ENCODE measurements at regions of chr11 and their contacts with region 1.

Region 1: GRCh38 chr11:119474682-119475596 is 52.0 kb upstream of the THY1 start:
- DNase-seq: peak; percentile 92
- H3K4me3 ChIP-seq: no peak overlapping the region
- H3K27ac ChIP-seq: peak overlapping the region; percentile 55 to 71 (median 64)
- H3K4me1 ChIP-seq: peaks cover 0 to 32% (median 23%) of the 10 kb centered on the region in 4 donors
- H3K27me3 ChIP-seq: no peaks in the 10 kb centered on the region
- CTCF ChIP-seq: peak; percentile 89 to 92 (median 90)
- EP300 ChIP-seq: no peak
- POLR2A ChIP-seq: no peak

Region 2: DNA sequence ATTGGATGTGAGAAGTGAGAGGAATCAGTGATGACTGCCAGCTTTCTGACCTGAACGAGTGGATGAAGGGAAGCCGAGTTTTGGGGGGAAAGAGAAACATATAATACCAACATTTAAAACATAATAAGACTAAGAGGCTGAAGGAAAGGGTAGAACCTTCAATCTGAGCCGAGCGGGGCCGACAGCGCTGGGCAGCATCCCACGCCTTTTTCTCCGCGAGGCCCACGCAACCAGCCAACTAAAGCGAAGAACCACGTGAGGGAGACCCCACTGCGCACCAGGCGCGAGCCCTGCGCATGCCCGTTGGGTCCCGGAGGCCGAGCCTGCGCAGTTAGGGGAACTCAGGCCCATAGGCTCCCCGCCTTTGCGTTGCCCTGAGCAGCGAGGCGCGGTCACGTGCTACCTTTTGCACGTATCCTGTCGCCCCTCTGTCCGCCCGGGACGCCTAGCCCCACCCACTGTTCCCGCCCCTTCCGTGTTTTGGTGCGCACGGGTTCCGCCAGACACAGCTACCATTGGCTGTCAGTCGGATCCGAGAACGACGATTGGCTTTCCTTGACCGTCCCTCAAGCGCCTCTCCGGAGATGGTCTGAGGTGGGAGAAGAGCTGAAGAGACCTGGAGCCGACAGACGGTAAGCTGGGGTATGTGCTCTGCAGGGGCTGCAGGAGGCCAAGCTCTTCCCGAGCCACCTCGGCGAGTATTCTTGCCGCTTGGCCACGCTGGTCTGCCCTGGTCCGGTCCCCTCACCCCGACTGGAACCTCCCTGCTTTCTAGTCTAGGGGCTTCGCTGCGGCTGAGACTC is 353.7 kb before region 1 on chr11 and contains the start of gene HINFP:
- intact Hi-C with region 1: no loop called
- DNase-seq: peak; percentile 100
- H3K4me3 ChIP-seq: peak within 1 kb of the TSS; percentile 83 to 91 (median 87)
- H3K27ac ChIP-seq: peak within 1 kb of the TSS; percentile 80 to 92 (median 84)
- H3K4me1 ChIP-seq: peaks cover 20 to 35% (median 21%) of the 10 kb centered on the region in 4 donors
- H3K27me3 ChIP-seq: no peaks in the 10 kb centered on the region
- CTCF ChIP-seq: peak in 1 of 3 experiments; percentile 19
- EP300 ChIP-seq: no peak
- POLR2A ChIP-seq: no peak
- total RNA-seq, gene HINFP: 22.8 to 30.8 (median 26.4) TPM

Region 3: GRCh38 chr11:119356349-119357031 is 118.4 kb before region 1 on chr11:
- intact Hi-C with region 1: loop called (anchors 5 kb)
- DNase-seq: no peak
- H3K4me3 ChIP-seq: peak overlapping the region; percentile 48 to 68 (median 62)
- H3K27ac ChIP-seq: peak overlapping the region; percentile 84 to 86 (median 86)
- H3K4me1 ChIP-seq: peaks cover 39 to 58% (median 47%) of the 10 kb centered on the region in 4 donors
- H3K27me3 ChIP-seq: no peaks in the 10 kb centered on the region
- CTCF ChIP-seq: peak; percentile 69 to 96 (median 93)
- EP300 ChIP-seq: no peak
- POLR2A ChIP-seq: no peak

Region 4: DNA sequence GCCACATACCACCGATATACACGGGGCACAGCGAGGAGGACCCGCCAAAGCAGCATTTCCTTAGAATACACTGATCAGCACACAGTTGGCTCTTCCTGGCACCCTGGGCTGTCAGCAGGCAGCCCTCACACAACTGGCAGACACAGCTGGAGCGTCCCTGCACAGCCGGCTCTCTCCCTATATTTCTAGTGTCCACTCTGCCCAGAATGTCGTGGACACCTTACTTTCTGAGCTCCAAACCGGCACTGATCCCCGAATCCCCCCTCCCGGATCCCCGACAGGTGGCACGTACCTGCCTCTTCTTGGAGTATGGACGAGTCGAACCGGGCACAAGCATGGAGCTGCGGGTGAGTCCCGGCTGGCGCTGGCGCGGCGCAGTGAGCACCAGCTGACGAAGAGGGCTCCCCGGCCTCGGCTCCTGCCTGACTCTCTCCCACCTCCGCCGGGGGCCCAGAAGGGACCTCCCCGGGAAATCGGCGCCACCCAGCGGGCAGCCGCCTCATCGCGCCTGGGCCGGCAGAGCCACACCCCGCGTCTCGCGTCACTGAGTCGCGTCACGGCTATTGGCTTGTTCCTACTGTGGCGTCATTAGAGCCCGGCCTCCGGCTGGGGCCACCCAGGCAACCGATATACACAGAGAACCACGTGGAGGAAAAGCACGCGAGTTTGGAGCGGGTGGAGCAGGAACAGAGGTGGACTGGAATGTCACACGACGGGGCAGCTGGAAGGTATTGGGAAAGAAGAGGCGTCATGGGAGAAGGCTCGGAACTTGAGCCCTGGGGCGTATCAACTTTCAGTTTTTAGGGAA is 93.6 kb before region 1 on chr11 and contains the start of gene USP2:
- intact Hi-C with region 1: loop called (anchors 2 kb)
- DNase-seq: peak; percentile 99
- H3K4me3 ChIP-seq: peak within 1 kb of the TSS; percentile 53 to 59 (median 56)
- H3K27ac ChIP-seq: peak within 1 kb of the TSS; percentile 72 to 81 (median 79)
- H3K4me1 ChIP-seq: peaks cover 23 to 41% (median 35%) of the 10 kb centered on the region in 4 donors
- H3K27me3 ChIP-seq: no peaks in the 10 kb centered on the region
- CTCF ChIP-seq: peak; percentile 91 to 96 (median 93)
- EP300 ChIP-seq: peak; percentile 76
- POLR2A ChIP-seq: peak; percentile 38
- total RNA-seq, gene USP2: 4.6 to 9.9 (median 6.1) TPM

Region 5: GRCh38 chr11:119417726-119418540 is 57.0 kb before region 1 on chr11:
- intact Hi-C with region 1: loop called (anchors 5 kb)
- DNase-seq: no peak
- H3K4me3 ChIP-seq: no peak overlapping the region
- H3K27ac ChIP-seq: peak overlapping the region in 3 of 4 donors; percentile 22 to 72 (median 44)
- H3K4me1 ChIP-seq: peaks cover 17 to 44% (median 33%) of the 10 kb centered on the region in 4 donors
- H3K27me3 ChIP-seq: peaks cover 0 to 26% (median 0%) of the 10 kb centered on the region in 4 donors
- CTCF ChIP-seq: no peak
- EP300 ChIP-seq: no peak
- POLR2A ChIP-seq: no peak

Measured in esophagus muscularis mucosa (tissue), 4 donors.